ENCODE measurements at regions of chr18 and their contacts with region 1.

Region 1: DNA sequence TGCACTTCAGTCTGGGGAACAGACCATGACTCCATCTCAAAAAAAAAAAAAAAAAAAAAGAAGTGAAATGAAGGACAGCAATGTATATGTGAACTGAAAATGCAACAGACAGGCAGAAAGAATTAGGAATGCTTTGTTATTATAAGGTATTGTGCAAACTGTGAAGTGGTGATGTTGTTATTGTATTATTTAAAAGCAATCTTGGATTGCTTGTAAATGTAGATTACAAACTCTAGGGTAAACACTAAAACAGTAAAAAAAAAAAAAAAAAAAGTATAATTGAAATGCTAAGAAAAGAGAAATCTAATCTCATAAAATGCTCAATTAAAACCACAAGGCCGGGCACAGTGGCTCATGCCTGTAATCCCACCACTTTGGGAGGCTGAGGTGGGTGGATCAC is 25.3 kb downstream of the DYM start:
- DNase-seq: no peak
- ATAC-seq: no peak
- H3K4me3 ChIP-seq: no peak overlapping the region
- H3K27ac ChIP-seq: no peak overlapping the region
- H3K4me1 ChIP-seq: no peaks in the 10 kb centered on the region; the same call in 1 of the 2 replicates
- H3K27me3 ChIP-seq: no peaks in the 10 kb centered on the region
- CTCF ChIP-seq: no peak

Region 2: GRCh38 chr18:49322765-49323490 is 112.2 kb before region 1 on chr18:
- CTCF ChIA-PET with region 1: no interaction called
- POLR2A ChIA-PET with region 1: no interaction called
- in situ Hi-C with region 1: no loop called
- intact Hi-C with region 1: no loop called
- DNase-seq: no peak
- ATAC-seq: no peak
- H3K4me3 ChIP-seq: no peak overlapping the region
- H3K27ac ChIP-seq: no peak overlapping the region
- H3K4me1 ChIP-seq: no peaks in the 10 kb centered on the region
- H3K27me3 ChIP-seq: no peaks in the 10 kb centered on the region
- CTCF ChIP-seq: no peak

Region 3: DNA sequence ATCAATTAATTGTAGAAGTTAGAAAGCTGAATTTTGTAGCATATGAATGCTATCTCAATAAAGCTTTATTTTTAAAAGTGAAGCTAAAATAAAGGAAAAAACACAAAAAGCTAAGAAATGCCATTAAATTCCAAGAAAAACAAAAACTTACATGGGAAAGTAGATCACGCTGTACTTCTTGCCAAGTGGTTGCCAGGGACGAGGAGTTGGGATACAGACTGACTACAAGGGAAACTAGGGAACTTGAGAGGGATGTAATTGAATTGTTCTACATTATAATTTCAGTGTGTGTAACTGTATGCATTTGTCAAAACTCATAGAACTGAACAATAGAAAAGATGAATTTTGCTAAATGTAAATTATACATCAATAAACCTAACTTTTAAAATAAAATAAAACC is 82.8 kb before region 1 on chr18:
- CTCF ChIA-PET with region 1: no interaction called
- POLR2A ChIA-PET with region 1: interaction called, 15 read pairs
- in situ Hi-C with region 1: no loop called
- intact Hi-C with region 1: no loop called
- DNase-seq: no peak
- ATAC-seq: no peak
- H3K4me3 ChIP-seq: no peak overlapping the region
- H3K27ac ChIP-seq: no peak overlapping the region
- H3K4me1 ChIP-seq: no peaks in the 10 kb centered on the region
- H3K27me3 ChIP-seq: no peaks in the 10 kb centered on the region
- CTCF ChIP-seq: no peak

Region 4: DNA sequence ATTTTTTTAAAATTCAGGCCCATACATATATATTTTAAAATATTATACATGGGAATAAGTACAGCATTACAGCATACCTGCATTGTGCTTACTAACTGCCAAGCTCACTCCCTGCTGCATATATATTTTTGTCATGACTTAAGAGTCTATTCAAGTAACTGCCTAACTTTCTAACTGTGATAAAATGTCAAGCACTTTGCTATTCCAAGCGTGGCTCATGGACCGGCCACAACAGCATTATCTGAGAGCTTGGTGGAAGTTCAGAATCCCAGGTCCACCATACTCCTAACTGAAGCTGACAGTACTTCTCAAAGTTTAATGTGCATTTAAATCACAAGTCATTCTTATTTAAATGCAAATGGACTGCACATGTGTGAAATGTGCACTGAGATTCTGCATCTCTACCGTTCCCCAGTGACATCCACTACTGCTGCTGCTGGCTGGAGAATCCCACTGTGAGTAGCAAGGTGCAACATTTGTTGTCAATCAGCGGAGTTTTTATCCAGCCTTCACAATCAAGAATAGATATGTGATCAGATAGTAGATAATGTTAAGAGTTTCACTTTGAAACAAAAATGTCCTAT is 53.8 kb before region 1 on chr18:
- CTCF ChIA-PET with region 1: interaction called, 10 read pairs
- POLR2A ChIA-PET with region 1: no interaction called
- in situ Hi-C with region 1: no loop called
- intact Hi-C with region 1: no loop called
- DNase-seq: no peak
- ATAC-seq: no peak
- H3K4me3 ChIP-seq: no peak overlapping the region
- H3K27ac ChIP-seq: no peak overlapping the region
- H3K4me1 ChIP-seq: no peaks in the 10 kb centered on the region
- H3K27me3 ChIP-seq: no peaks in the 10 kb centered on the region
- CTCF ChIP-seq: no peak

Region 5: DNA sequence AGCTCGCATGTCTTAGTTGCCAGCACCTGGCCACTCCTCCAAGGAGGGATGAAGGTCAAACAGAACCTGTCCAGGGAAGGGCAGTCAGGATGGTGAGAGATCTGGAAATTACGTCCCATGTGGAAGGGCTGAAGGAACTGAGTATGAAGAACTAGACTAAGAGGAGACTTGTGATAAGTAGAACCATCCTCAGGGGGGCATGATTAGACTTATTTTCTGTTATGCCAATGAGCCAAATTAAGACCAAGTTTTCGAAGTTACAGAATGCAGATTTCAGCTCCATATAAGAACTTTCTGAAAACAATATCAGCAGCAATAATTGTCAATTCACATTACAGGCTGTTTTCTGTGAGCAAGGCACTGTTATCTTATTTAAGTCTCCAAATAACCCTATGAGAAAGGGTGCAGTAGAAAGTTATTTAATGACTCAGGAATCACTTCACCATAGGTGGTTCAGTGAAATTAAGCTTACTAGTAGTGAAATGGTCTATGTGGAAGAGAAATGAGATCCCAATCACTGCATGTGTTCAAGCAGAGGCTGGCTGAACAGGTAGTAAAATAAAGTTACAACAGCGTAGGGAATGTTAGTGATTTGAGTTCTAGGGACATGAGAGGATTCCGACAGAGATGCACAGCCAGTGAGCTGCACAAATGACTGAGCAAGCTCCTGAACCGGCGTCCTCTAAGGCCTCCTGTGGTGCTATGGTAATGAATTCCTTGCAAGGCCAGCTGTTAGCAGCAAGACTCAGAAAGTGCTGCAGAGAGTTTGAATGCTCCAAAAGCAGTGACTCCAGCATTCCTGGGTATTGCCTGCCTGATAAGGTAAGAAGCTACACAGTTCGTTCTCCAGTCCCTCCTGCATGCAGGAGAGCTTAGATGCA is 29.8 kb after region 1 on chr18:
- CTCF ChIA-PET with region 1: no interaction called
- POLR2A ChIA-PET with region 1: no interaction called
- in situ Hi-C with region 1: no loop called
- intact Hi-C with region 1: no loop called
- DNase-seq: no peak
- ATAC-seq: no peak
- H3K4me3 ChIP-seq: no peak overlapping the region
- H3K27ac ChIP-seq: no peak overlapping the region
- H3K4me1 ChIP-seq: peaks cover 4% of the 10 kb centered on the region; the same call in 1 of the 2 replicates
- H3K27me3 ChIP-seq: no peaks in the 10 kb centered on the region
- CTCF ChIP-seq: no peak